Naive thymus-derived CD4-positive, alpha-beta T cell (primary cell): ENCODE measurements at regions of chr12 and their contacts with region 1.

Region 1: GRCh38 chr12:2944401-2945047 is 14.7 kb upstream of the TEAD4 start:
- DNase-seq: peak; percentile 4 to 58 (median 40)
- ATAC-seq: peak; percentile 65
- H3K4me3 ChIP-seq: no peak overlapping the region
- H3K4me3 Mint-ChIP-seq: peak overlapping the region in 4 of 10 donors; percentile 32 to 56 (median 38)
- H3K27ac ChIP-seq: no peak overlapping the region
- H3K27ac Mint-ChIP-seq: no peak overlapping the region
- H3K4me1 ChIP-seq: no peaks in the 10 kb centered on the region
- H3K4me1 Mint-ChIP-seq: peaks cover 0 to 5% (median 4%) of the 10 kb centered on the region in 7 donors
- H3K27me3 ChIP-seq: no peaks in the 10 kb centered on the region
- H3K27me3 Mint-ChIP-seq: peaks cover 3 to 5% (median 4%) of the 10 kb centered on the region in 5 donors

Region 2: GRCh38 chr12:2853626-2854025 is 90.9 kb before region 1 on chr12:
- CTCF ChIA-PET with region 1: interaction called, 3 read pairs
- POLR2A ChIA-PET with region 1: no interaction called
- intact Hi-C with region 1: loop called in 1 of 2 experiments (anchors 1 kb)
- DNase-seq: peak in 7 of 9 donors; percentile 12 to 56 (median 25)
- ATAC-seq: peak; percentile 74
- H3K4me3 ChIP-seq: no peak overlapping the region
- H3K4me3 Mint-ChIP-seq: no peak overlapping the region
- H3K27ac ChIP-seq: no peak overlapping the region
- H3K27ac Mint-ChIP-seq: peak overlapping the region in 2 of 9 donors; percentile 33 to 43
- H3K4me1 ChIP-seq: no peaks in the 10 kb centered on the region
- H3K4me1 Mint-ChIP-seq: peaks cover 0 to 5% (median 2%) of the 10 kb centered on the region in 7 donors
- H3K27me3 ChIP-seq: no peaks in the 10 kb centered on the region
- H3K27me3 Mint-ChIP-seq: no peaks in the 10 kb centered on the region

Region 3: DNA sequence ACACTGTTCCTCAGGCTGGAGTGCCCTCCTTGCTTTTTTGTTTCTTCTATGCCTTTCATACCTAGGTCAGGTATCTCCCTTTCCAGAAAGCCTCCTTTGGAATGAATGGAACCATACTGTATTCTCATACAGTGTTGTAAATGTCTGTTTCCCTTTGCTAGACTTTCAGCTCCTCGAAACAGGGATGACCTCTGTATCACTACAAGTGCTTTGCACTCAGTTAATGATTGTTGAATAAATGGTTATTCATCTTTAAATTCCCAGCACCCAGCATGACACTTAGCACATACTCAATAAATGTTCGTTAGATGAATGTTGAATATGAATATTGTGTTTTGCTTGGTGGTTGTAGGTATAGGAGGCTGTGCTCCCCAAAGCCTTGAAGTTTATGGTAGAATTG is 59.7 kb before region 1 on chr12:
- CTCF ChIA-PET with region 1: no interaction called
- POLR2A ChIA-PET with region 1: no interaction called
- intact Hi-C with region 1: loop called (anchors 1 kb)
- DNase-seq: no peak
- ATAC-seq: no peak
- H3K4me3 ChIP-seq: no peak overlapping the region
- H3K4me3 Mint-ChIP-seq: no peak overlapping the region
- H3K27ac ChIP-seq: no peak overlapping the region
- H3K27ac Mint-ChIP-seq: peak overlapping the region in 5 of 9 donors; percentile 1 to 45 (median 35)
- H3K4me1 ChIP-seq: peaks cover 0 to 3% of the 10 kb centered on the region in 2 donors
- H3K4me1 Mint-ChIP-seq: peaks cover 8 to 48% (median 24%) of the 10 kb centered on the region in 7 donors
- H3K27me3 ChIP-seq: no peaks in the 10 kb centered on the region
- H3K27me3 Mint-ChIP-seq: no peaks in the 10 kb centered on the region